ENCODE measurements at regions of chr10 and their contacts with region 1.

Region 1: DNA sequence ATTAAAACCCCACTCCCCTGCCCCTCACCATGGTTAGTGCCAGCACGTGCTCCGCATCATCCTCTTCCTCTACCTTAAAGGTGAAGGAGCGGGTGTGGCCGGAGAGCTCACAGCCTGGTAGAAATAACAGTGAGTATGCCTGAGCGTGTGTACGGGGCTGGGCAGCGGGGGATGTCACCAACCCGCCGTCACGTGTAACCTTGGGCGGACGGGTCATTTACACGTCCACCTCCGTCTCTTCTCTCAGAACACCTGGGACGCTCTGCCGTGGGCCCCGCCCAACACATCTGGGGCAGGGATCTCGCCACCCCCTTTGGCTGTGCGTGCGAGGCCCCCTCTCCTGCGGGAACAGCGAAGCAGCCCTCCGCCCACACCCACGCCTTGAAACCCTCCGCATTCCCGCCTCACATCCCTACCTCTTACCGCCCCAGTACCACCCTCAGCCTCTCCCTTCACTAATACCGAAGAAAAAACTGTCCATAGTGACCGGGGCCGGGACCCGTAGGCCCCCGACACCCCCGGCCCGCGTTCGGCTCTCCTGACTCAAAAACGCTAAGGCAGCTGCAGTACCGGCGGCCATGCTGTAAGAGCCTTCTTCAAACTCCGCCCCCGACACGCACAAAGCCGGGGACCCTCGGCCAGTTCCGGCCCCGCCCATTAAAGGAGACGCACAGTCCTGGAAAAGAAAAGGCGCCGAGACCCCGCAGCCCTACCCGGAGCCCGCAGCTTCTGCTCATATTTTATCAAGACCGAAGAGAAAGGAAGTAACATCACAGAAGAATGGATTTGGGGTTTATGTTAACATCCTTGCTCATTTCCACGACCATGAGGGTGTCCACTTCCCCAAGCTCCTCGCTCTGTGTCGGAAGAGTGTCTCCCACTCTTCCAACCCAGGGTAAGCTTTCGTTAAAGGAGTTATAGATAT is at the start of gene NPM3:
- DNase-seq: peak; percentile 96
- H3K4me3 Mint-ChIP-seq: peak within 1 kb of the TSS; percentile 100
- H3K27ac Mint-ChIP-seq: peak within 1 kb of the TSS; percentile 99
- H3K4me1 Mint-ChIP-seq: peaks cover 47% of the 10 kb centered on the region
- H3K27me3 Mint-ChIP-seq: peaks cover 9% of the 10 kb centered on the region
- total RNA-seq, gene NPM3: 172 and 175 TPM in 2 replicates

Region 2: DNA sequence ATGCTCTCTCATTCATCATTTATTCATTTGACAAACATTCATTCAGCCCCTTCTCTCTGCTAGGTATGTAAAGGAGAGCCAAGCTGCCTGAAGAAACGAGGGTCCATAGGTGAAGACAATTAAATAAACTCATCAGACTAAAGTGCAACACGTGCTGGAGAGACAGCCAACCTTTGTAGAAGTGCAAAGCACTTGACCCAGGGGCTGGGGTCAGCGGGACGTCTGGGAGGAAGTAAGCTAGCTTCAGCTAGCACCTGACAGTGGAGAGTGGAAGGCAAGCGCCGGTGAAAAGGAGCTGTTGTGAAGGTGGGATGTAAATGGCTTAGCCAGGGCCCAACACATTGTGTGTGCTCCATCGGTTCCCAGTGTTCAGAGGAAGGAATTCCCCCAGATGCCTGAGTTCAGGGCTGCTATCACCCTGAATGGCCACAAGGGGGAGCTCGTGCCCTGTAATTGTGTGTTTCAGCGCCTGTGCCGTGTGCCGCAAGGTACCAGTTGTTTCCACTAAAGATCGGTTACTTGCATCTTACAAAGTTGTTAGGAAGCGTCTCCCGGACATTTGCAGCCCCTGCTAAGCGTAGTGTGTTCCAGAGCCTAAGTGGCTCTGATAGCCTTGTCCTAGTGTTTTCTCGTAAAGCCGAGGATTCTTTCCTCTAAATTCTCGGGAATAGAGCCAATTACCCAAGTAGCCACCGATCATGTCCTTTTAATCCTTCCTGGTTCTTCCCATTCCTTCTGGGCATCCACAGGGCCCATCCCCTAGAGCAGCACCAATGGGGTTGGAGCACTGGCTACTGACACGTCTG is 621.4 kb before region 1 on chr10:
- intact Hi-C with region 1: loop called (anchors 10 kb)
- DNase-seq: peak; percentile 90
- H3K4me3 Mint-ChIP-seq: no peak overlapping the region
- H3K27ac Mint-ChIP-seq: no peak overlapping the region
- H3K4me1 Mint-ChIP-seq: peaks cover 14% of the 10 kb centered on the region
- H3K27me3 Mint-ChIP-seq: peaks cover 62% of the 10 kb centered on the region

Region 3: GRCh38 chr10:101353692-101354327 is 429.3 kb before region 1 on chr10 and contains the start of gene BTRC:
- intact Hi-C with region 1: loop called (anchors 10 kb)
- DNase-seq: peak; percentile 99
- H3K4me3 Mint-ChIP-seq: peak within 1 kb of the TSS; percentile 90
- H3K27ac Mint-ChIP-seq: peak within 1 kb of the TSS; percentile 98
- H3K4me1 Mint-ChIP-seq: peaks cover 24% of the 10 kb centered on the region
- H3K27me3 Mint-ChIP-seq: peaks cover 19% of the 10 kb centered on the region
- total RNA-seq, gene BTRC: 16.2 and 19.0 TPM in 2 replicates

Region 4: GRCh38 chr10:101602761-101603398 is 180.2 kb before region 1 on chr10:
- intact Hi-C with region 1: loop called (anchors 1 kb)
- DNase-seq: peak; percentile 93
- H3K4me3 Mint-ChIP-seq: no peak overlapping the region
- H3K27ac Mint-ChIP-seq: no peak overlapping the region
- H3K4me1 Mint-ChIP-seq: no peaks in the 10 kb centered on the region
- H3K27me3 Mint-ChIP-seq: no peaks in the 10 kb centered on the region

Region 5: DNA sequence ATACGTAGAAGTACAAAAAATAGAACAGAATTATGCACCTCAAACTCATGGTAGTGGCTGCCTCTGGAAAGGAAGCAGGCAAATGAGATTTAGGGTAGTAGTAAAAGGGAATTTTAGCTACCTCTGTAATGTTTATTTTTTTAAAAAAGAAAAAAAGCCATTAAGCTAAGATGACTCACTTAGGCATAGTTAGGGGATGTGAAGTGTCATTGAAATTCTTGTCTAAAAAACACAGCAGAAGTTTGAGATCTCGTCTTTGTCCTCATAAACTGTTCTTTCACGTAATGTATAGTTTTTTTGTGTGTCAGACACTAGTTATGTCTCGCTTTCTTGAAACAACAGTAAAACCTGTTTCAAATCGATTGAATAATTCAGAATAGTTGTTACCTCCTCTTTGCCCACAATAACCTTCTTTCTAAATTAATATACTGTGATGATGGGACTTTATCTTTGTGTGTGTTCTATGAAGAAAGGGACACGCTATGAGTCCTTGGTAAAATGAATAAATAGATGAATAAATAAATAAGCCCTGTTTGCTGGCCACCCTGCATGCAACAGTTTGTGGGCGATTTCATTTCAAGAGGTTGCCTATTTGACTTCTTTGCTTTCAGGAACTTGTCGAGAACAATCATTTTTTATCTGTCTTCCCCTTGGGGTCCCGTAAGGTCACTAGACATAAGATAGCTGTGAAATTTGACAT is 73.6 kb before region 1 on chr10:
- intact Hi-C with region 1: loop called (anchors 5 kb)
- DNase-seq: no peak
- H3K4me3 Mint-ChIP-seq: no peak overlapping the region
- H3K27ac Mint-ChIP-seq: no peak overlapping the region
- H3K4me1 Mint-ChIP-seq: peaks cover 12% of the 10 kb centered on the region
- H3K27me3 Mint-ChIP-seq: peaks cover 59% of the 10 kb centered on the region

Region 6: GRCh38 chr10:101824736-101825135 is 41.7 kb after region 1 on chr10:
- intact Hi-C with region 1: no loop called
- DNase-seq: no peak
- H3K4me3 Mint-ChIP-seq: no peak overlapping the region
- H3K27ac Mint-ChIP-seq: peak overlapping the region; percentile 18
- H3K4me1 Mint-ChIP-seq: peaks cover 13% of the 10 kb centered on the region
- H3K27me3 Mint-ChIP-seq: no peaks in the 10 kb centered on the region